Activated B cell treated with CpG ODN at 0.5 μM for 24 hours (primary cell): ENCODE measurements at regions of chr1 and their contacts with region 1.

Region 1: DNA sequence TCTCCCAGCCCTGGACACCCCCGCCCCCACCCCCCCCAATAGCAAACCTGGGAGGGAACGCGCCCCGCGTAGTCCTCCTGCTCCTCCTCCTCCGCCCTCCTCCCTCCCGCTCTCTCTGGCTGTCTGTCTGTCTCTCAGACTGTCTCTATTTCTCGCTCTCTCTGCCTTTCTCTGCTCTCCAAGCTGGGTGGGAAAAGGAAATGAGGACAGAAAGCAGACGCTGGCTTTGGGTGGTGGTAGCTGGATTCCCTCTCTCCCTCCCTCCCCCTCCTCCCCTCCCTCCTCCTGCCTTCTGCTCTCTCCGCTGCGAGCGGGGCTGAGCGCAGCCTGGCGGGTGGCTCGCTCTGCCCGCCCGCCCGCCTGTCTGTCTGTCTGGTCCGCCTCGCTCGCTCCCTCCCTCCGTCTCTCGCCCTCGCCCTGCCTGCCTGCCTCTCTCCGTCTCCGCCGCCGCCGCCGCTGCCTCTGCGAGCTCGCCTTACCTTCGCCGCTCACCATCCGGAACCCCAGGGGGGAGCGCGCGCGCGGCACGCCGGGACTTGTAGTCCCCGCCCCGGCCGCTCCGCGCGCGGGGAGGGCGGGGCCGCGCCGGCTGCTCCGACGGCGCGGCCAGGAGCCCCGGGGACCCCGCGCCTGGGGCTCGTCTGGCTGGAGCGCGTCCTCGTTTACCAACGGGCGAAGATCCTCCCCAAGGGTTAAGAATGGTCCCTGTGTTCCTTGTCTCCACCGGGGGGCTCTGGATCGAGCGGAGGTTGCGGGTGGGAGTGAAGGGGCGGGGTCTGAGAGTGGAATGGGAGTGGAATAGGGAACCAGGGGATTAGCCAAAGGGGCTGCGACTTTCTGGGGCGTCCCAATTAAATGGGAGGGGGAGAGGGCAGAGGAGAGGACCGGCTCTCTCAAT is at the start of gene AHDC1:
- DNase-seq: peak; percentile 89
- ATAC-seq: peak; percentile 78
- H3K4me3 Mint-ChIP-seq: peak within 1 kb of the TSS; percentile 95
- H3K27ac Mint-ChIP-seq: peak within 1 kb of the TSS; percentile 83
- H3K4me1 Mint-ChIP-seq: peaks cover 49% of the 10 kb centered on the region
- H3K27me3 Mint-ChIP-seq: no peaks in the 10 kb centered on the region
- CTCF ChIP-seq: no peak
- total RNA-seq, gene AHDC1: 22.4 and 23.3 TPM in 2 replicates

Region 2: DNA sequence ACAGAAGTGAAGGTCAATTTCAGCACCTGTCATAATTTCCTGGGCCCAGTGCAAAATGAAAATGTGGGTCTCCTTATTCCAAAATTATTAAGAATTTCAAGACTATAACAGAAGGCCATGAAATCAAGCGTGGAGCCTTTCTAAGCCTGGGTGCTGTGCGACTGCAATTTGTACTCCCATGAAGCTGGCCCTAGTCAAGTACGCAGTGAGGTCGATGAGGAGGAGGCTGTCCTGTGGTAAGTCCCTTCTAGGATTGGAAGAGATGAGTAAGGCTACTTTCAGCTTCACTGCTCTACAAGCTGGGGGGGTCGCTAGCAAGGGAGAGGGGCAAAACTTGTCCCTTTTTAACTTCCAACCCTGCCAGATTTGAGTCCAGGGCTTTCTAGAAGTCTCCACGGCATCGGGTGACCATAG is 682.8 kb before region 1 on chr1:
- CTCF ChIA-PET with region 1: no interaction called
- POLR2A ChIA-PET with region 1: no interaction called
- intact Hi-C with region 1: no loop called
- DNase-seq: no peak
- ATAC-seq: peak; percentile 49
- H3K4me3 Mint-ChIP-seq: peak overlapping the region; percentile 96
- H3K27ac Mint-ChIP-seq: peak overlapping the region; percentile 95
- H3K4me1 Mint-ChIP-seq: peaks cover 31% of the 10 kb centered on the region
- H3K27me3 Mint-ChIP-seq: no peaks in the 10 kb centered on the region
- CTCF ChIP-seq: no peak

Region 3: GRCh38 chr1:27044613-27045151 is 559.2 kb before region 1 on chr1:
- CTCF ChIA-PET with region 1: interaction called, 4 read pairs
- POLR2A ChIA-PET with region 1: interaction called, 3 read pairs
- intact Hi-C with region 1: loop called (anchors 5 kb)
- DNase-seq: peak; percentile 85
- ATAC-seq: peak; percentile 96
- H3K4me3 Mint-ChIP-seq: peak overlapping the region; percentile 28
- H3K27ac Mint-ChIP-seq: no peak overlapping the region
- H3K4me1 Mint-ChIP-seq: peaks cover 16% of the 10 kb centered on the region
- H3K27me3 Mint-ChIP-seq: no peaks in the 10 kb centered on the region
- CTCF ChIP-seq: peak; percentile 68

Region 4: GRCh38 chr1:27234049-27234882 is 369.7 kb before region 1 on chr1 and contains the start of gene WDTC1:
- CTCF ChIA-PET with region 1: no interaction called
- POLR2A ChIA-PET with region 1: no interaction called
- intact Hi-C with region 1: loop called (anchors 1 kb)
- DNase-seq: peak; percentile 94
- ATAC-seq: peak; percentile 91
- H3K4me3 Mint-ChIP-seq: peak within 1 kb of the TSS; percentile 98
- H3K27ac Mint-ChIP-seq: peak within 1 kb of the TSS; percentile 90
- H3K4me1 Mint-ChIP-seq: peaks cover 30% of the 10 kb centered on the region
- H3K27me3 Mint-ChIP-seq: no peaks in the 10 kb centered on the region
- CTCF ChIP-seq: no peak
- total RNA-seq, gene WDTC1: 62.8 and 65.1 TPM in 2 replicates

Region 5: DNA sequence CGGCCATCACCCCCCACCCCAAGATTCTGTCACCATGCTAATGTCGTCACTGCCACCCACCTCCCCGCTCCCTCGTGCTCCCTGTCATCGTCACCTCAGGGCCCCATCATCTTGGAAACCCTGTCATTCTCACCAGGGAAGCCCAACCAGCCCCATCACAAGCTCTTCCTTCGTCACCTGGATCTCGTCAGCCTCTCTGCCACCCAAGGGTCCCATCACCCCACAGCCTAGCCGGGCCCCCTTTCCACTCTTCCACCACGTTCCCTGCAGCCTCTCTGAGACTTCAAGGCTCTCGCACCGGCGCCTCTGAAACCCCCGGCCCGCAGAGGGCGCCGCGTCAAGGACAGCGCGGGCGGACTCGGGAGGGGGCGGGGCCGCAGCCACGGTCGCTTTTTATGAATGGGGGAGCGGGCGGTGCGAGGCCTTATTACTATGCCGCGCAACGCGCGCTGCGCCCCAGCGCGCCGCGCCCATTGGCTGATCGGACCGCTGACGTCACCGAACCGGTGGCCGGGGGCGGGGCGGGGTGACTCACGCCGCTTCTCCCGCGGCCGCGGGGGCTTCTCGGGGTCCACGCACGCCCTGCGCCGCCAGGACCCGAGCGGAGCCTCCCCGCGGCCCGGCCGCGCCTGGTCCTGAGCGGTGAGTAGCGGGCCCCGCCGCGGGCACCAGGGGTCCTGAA is 211.7 kb before region 1 on chr1 and contains the start of gene GPR3:
- CTCF ChIA-PET with region 1: interaction called, 36 read pairs
- POLR2A ChIA-PET with region 1: interaction called, 4 read pairs
- intact Hi-C with region 1: loop called (anchors 1 kb)
- DNase-seq: peak; percentile 91
- ATAC-seq: peak; percentile 91
- H3K4me3 Mint-ChIP-seq: peak within 1 kb of the TSS; percentile 82
- H3K27ac Mint-ChIP-seq: peak within 1 kb of the TSS; percentile 60
- H3K4me1 Mint-ChIP-seq: peaks cover 18% of the 10 kb centered on the region
- H3K27me3 Mint-ChIP-seq: no peaks in the 10 kb centered on the region
- CTCF ChIP-seq: no peak
- total RNA-seq, gene GPR3: 0.11 TPM in 1 of 2 replicates, not detected in the other

Region 6: GRCh38 chr1:27525296-27526272 is 78.3 kb before region 1 on chr1:
- CTCF ChIA-PET with region 1: interaction called, 3 read pairs
- POLR2A ChIA-PET with region 1: interaction called, 6 read pairs
- intact Hi-C with region 1: loop called (anchors 2 kb)
- DNase-seq: peak; percentile 51
- ATAC-seq: peak; percentile 64
- H3K4me3 Mint-ChIP-seq: peak overlapping the region; percentile 41
- H3K27ac Mint-ChIP-seq: peak overlapping the region; percentile 79
- H3K4me1 Mint-ChIP-seq: peaks cover 76% of the 10 kb centered on the region
- H3K27me3 Mint-ChIP-seq: no peaks in the 10 kb centered on the region
- CTCF ChIP-seq: no peak

Region 7: DNA sequence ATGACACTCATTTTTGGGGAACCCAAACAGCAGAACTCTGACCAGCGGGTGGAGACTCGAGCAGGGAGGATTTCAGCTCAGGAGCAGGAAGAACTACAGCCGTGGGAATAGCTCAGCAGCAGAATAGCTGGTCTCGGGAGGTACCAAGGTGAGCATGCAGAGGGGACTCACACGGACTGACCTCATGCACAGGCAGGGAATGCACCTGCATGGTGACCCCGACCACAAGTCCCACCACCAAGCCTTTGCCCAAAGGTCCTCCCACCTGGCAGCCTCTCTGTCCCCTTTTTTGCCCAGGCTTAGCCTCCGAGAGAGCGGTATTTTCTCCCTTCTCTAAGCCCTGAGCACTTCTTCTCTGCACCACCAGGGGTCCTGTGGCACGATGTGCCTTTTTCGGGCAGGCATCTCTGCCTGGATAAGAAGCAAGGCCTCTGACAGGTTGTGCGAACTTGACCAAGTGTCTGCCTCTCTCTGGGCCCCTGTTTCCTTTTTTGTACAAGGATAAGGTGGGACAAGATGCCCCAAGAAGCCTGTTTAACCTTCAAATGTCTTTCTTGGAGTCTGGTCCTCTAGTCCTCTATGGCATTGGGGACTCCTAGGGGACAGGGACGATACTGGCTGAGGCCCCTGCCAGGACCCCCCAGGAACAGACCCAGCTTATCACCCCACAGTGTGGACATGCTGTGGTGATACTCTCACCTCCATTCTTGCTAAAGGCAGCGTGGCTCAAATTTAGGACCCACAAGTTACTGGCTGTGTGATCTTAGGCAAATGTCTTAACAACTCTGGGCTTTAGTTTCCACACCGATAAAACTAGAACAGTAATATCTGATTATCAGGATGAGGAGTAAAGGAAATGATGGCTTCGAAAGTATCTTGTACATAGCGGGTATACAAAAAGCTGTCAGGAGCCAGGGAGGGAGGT is 40.0 kb after region 1 on chr1:
- CTCF ChIA-PET with region 1: interaction called, 21 read pairs
- POLR2A ChIA-PET with region 1: interaction called, 3 read pairs
- intact Hi-C with region 1: loop called (anchors 1 kb)
- DNase-seq: peak; percentile 53
- ATAC-seq: peak; percentile 99
- H3K4me3 Mint-ChIP-seq: no peak overlapping the region
- H3K27ac Mint-ChIP-seq: peak overlapping the region; percentile 46
- H3K4me1 Mint-ChIP-seq: peaks cover 15% of the 10 kb centered on the region
- H3K27me3 Mint-ChIP-seq: no peaks in the 10 kb centered on the region
- CTCF ChIP-seq: no peak